ENCODE measurements at regions of chr4 and their contacts with region 1.

Region 1: GRCh38 chr4:87220094-87220822 is at the start of gene KLHL8:
- DNase-seq: peak; percentile 82 to 94 (median 89)
- ATAC-seq: peak; percentile 97
- H3K4me3 ChIP-seq: peak within 1 kb of the TSS; percentile 97
- H3K4me3 Mint-ChIP-seq: peak within 1 kb of the TSS; percentile 73 to 99 (median 94)
- H3K27ac ChIP-seq: peak within 1 kb of the TSS; percentile 92
- H3K27ac Mint-ChIP-seq: peak within 1 kb of the TSS; percentile 71 to 95 (median 91)
- H3K4me1 ChIP-seq: peaks cover 0 to 8% of the 10 kb centered on the region in 2 donors
- H3K4me1 Mint-ChIP-seq: peaks cover 6 to 32% (median 17%) of the 10 kb centered on the region in 7 donors
- H3K27me3 ChIP-seq: no peaks in the 10 kb centered on the region
- H3K27me3 Mint-ChIP-seq: peaks cover 0 to 14% (median 0%) of the 10 kb centered on the region in 5 donors
- total RNA-seq, gene KLHL8: 10.9 to 15.7 (median 11.6) TPM

Region 2: DNA sequence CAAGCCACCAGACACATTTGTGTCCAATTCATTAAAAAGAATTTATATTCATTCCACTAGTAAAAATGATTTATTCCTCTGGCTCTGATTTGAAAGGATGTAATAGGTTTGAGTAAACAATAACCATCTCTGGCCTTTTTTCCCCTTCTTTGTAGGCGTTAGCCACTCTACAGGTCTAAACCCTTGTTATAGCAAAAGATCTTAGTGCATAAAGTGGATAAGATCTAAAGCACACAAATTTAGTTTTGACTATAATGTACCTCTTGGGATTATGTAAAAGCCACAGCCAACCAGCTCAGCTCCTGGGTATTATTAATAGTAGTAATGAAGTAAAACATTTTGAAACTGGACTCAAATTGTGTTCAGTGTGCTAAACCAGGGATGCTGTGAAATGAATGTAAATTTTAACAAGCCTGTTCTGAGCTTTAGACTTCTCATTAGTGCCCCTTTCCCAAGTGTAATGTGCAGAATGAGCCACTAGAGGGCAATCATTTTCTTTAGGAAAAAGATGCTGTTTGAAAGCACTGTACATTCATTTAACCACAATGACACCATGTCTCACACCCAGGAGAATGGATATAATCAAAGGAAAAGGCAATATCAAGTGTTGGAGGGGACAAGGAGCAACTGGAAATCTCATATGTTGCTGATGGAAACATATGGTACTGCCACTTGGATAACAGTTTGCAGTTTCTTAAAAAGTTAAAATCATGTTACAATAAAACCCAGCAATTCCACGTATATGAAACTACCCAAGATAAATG is 69.6 kb before region 1 on chr4:
- CTCF ChIA-PET with region 1: interaction called, 3 read pairs
- POLR2A ChIA-PET with region 1: no interaction called
- intact Hi-C with region 1: loop called (anchors 1 to 5 kb)
- DNase-seq: peak in 8 of 9 donors; percentile 32 to 71 (median 55)
- ATAC-seq: peak; percentile 85
- H3K4me3 ChIP-seq: no peak overlapping the region
- H3K4me3 Mint-ChIP-seq: no peak overlapping the region
- H3K27ac ChIP-seq: no peak overlapping the region
- H3K27ac Mint-ChIP-seq: no peak overlapping the region
- H3K4me1 ChIP-seq: no peaks in the 10 kb centered on the region
- H3K4me1 Mint-ChIP-seq: peaks cover 0 to 4% (median 0%) of the 10 kb centered on the region in 7 donors
- H3K27me3 ChIP-seq: no peaks in the 10 kb centered on the region
- H3K27me3 Mint-ChIP-seq: no peaks in the 10 kb centered on the region

Region 3: GRCh38 chr4:87179751-87180150 is 40.5 kb before region 1 on chr4:
- CTCF ChIA-PET with region 1: no interaction called
- POLR2A ChIA-PET with region 1: interaction called, 6 read pairs
- intact Hi-C with region 1: loop called in 1 of 2 experiments (anchors 5 kb)
- DNase-seq: no peak
- ATAC-seq: no peak
- H3K4me3 ChIP-seq: no peak overlapping the region
- H3K4me3 Mint-ChIP-seq: no peak overlapping the region
- H3K27ac ChIP-seq: no peak overlapping the region
- H3K27ac Mint-ChIP-seq: no peak overlapping the region
- H3K4me1 ChIP-seq: no peaks in the 10 kb centered on the region
- H3K4me1 Mint-ChIP-seq: peaks cover 0 to 7% (median 0%) of the 10 kb centered on the region in 7 donors
- H3K27me3 ChIP-seq: no peaks in the 10 kb centered on the region
- H3K27me3 Mint-ChIP-seq: no peaks in the 10 kb centered on the region

Region 4: GRCh38 chr4:87209696-87210095 is 10.6 kb before region 1 on chr4:
- CTCF ChIA-PET with region 1: no interaction called
- POLR2A ChIA-PET with region 1: interaction called, 9 read pairs
- intact Hi-C with region 1: loop called in 1 of 2 experiments (anchors 1 kb)
- DNase-seq: peak in 7 of 9 donors; percentile 11 to 48 (median 31)
- ATAC-seq: peak; percentile 91
- H3K4me3 ChIP-seq: no peak overlapping the region
- H3K4me3 Mint-ChIP-seq: peak overlapping the region; percentile 58 to 79 (median 71)
- H3K27ac ChIP-seq: no peak overlapping the region
- H3K27ac Mint-ChIP-seq: peak overlapping the region in 7 of 9 donors; percentile 23 to 88 (median 65)
- H3K4me1 ChIP-seq: no peaks in the 10 kb centered on the region
- H3K4me1 Mint-ChIP-seq: peaks cover 5 to 49% (median 28%) of the 10 kb centered on the region in 7 donors
- H3K27me3 ChIP-seq: no peaks in the 10 kb centered on the region
- H3K27me3 Mint-ChIP-seq: no peaks in the 10 kb centered on the region

Region 5: DNA sequence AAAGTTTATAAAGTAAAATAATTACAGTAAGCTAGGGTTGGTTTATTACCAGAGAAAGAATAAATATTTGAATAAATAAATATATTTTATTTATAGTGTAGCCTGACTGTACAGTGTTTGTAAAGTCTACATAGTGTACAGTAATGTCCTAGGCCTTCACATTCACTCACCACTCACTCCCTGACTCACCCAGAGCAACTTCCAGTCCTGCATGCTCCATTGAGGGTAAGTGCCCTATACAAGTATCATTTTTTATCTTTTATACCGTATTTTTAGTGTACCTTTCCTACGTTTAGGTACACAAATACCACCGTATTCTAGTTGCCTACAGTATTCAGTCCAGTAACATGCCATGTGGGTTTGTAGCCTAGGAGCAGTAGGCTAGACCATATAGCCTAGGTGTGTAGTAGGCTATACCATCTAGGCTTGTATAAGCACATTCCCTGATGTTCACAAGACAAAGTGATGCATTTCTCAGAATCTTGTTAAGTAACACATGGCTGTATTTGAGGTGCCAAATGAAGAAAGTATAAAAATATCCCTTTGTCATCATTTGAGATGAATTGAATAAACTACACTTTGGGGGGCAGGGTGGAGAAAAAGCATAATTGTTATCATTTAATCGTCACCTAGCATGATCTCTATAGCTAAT is 14.9 kb after region 1 on chr4:
- CTCF ChIA-PET with region 1: interaction called, 4 read pairs
- POLR2A ChIA-PET with region 1: interaction called, 4 read pairs
- intact Hi-C with region 1: loop called (anchors 1 kb)
- DNase-seq: no peak
- ATAC-seq: no peak
- H3K4me3 ChIP-seq: peak overlapping the region; percentile 36
- H3K4me3 Mint-ChIP-seq: peak overlapping the region; percentile 62 to 87 (median 83)
- H3K27ac ChIP-seq: no peak overlapping the region
- H3K27ac Mint-ChIP-seq: peak overlapping the region in 2 of 9 donors; percentile 61 to 66
- H3K4me1 ChIP-seq: peaks cover 0 to 4% of the 10 kb centered on the region in 2 donors
- H3K4me1 Mint-ChIP-seq: peaks cover 0 to 6% (median 0%) of the 10 kb centered on the region in 7 donors
- H3K27me3 ChIP-seq: no peaks in the 10 kb centered on the region
- H3K27me3 Mint-ChIP-seq: peaks cover 0 to 18% (median 5%) of the 10 kb centered on the region in 5 donors

Region 6: DNA sequence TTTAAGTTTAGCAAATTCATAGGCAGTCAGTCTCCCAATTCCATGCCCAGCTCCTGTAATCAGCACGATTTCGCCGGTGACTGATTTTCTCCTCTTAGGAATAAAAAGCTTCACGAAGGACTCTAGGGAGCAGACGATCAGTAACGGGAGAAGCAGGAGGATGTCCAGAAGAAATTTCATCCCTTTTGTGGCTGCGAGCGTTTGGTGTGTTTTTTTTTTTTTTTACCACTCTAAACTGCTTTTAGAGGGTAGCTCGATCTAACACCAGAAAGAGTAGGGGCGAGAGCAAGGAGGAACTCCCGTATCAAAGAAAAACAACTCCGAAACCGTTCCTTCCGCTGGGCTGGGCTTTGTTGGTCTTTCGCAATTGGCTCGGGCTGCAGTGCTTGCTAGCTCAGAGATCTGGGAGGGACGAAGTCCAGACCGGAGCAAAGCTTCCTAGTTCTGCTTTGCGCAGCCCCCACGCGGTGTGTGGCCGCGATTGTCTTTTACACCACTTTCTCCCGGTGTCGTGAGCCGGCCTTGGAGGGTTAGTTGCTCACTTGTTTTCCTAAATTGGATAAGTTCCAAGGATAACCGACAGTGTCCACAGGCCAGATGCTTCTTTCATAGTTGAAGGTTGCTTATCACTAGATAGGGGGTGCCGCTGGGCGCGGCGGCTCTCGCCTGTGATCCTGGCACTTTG is 170.8 kb after region 1 on chr4 and contains the start of gene HSD17B11:
- CTCF ChIA-PET with region 1: no interaction called
- POLR2A ChIA-PET with region 1: interaction called, 3 read pairs
- intact Hi-C with region 1: loop called (anchors 1 to 2 kb)
- DNase-seq: peak; percentile 44 to 83 (median 79)
- ATAC-seq: peak; percentile 99
- H3K4me3 ChIP-seq: peak within 1 kb of the TSS; percentile 85
- H3K4me3 Mint-ChIP-seq: peak within 1 kb of the TSS; percentile 87 to 99 (median 97)
- H3K27ac ChIP-seq: peak within 1 kb of the TSS; percentile 82
- H3K27ac Mint-ChIP-seq: peak within 1 kb of the TSS; percentile 83 to 96 (median 94)
- H3K4me1 ChIP-seq: peaks cover 10 to 17% of the 10 kb centered on the region in 2 donors
- H3K4me1 Mint-ChIP-seq: peaks cover 32 to 66% (median 57%) of the 10 kb centered on the region in 7 donors
- H3K27me3 ChIP-seq: no peaks in the 10 kb centered on the region
- H3K27me3 Mint-ChIP-seq: peaks cover 0 to 14% (median 0%) of the 10 kb centered on the region in 5 donors
- total RNA-seq, gene HSD17B11: 34.3 to 74.4 (median 61.0) TPM

Region 7: DNA sequence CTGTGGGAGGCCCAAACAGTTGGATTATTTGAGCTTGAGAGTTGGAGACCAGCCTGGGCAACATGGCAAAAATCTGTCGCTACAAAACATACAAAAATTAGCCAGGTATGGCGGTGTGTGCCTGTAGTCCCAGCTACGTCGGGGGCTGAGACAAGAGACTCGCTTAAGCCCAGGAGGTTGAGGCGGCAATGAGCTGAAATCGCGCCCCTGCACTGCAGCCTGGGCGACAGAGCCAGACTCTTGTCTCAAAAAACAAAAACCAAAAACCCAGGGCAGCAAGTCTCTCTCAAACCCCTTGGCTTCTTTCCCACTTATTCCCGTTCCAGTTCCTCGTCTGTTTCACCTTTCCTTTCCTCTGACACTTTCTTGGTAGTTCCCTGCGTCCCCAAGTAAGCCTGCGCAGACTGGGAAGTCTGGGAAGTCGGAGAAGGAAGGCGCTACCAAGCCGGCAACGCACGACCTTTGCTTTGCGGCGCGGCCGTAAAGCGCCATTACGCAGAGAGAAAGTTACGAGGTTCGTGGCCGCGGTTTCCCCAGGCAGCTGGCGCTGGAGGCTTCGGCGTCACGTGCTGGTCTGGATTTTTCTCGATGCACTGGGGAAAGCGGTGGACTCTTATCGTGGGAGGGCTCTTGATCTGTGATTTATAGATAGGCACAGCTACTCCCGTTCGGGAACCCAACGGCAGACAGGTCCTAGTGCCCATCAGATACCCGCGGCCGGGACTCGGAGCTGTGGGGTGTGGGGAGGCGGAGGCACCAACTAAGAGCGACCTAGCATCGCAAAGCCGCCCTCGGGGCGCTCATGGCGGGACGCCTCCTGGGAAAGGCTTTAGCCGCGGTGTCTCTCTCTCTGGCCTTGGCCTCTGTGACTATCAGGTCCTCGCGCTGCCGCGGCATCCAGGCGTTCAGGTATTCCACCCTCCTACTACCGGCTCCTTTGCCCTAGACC is 202.1 kb after region 1 on chr4 and contains the start of gene NUDT9:
- CTCF ChIA-PET with region 1: no interaction called
- POLR2A ChIA-PET with region 1: interaction called, 4 read pairs
- intact Hi-C with region 1: loop called (anchors 1 kb)
- DNase-seq: peak; percentile 74 to 92 (median 89)
- ATAC-seq: peak; percentile 92
- H3K4me3 ChIP-seq: peak within 1 kb of the TSS; percentile 96
- H3K4me3 Mint-ChIP-seq: peak within 1 kb of the TSS; percentile 94 to 100 (median 98)
- H3K27ac ChIP-seq: peak within 1 kb of the TSS; percentile 85
- H3K27ac Mint-ChIP-seq: peak within 1 kb of the TSS; percentile 97 to 100 (median 99)
- H3K4me1 ChIP-seq: peaks cover 17% of the 10 kb centered on the region in 2 donors
- H3K4me1 Mint-ChIP-seq: peaks cover 14 to 59% (median 48%) of the 10 kb centered on the region in 7 donors
- H3K27me3 ChIP-seq: no peaks in the 10 kb centered on the region
- H3K27me3 Mint-ChIP-seq: no peaks in the 10 kb centered on the region
- total RNA-seq, gene NUDT9: 9.7 to 18.1 (median 10.5) TPM

Measured in naive thymus-derived CD4-positive, alpha-beta T cell (primary cell).